ENCODE measurements at regions of chr2 and their contacts with region 1.

Region 1: DNA sequence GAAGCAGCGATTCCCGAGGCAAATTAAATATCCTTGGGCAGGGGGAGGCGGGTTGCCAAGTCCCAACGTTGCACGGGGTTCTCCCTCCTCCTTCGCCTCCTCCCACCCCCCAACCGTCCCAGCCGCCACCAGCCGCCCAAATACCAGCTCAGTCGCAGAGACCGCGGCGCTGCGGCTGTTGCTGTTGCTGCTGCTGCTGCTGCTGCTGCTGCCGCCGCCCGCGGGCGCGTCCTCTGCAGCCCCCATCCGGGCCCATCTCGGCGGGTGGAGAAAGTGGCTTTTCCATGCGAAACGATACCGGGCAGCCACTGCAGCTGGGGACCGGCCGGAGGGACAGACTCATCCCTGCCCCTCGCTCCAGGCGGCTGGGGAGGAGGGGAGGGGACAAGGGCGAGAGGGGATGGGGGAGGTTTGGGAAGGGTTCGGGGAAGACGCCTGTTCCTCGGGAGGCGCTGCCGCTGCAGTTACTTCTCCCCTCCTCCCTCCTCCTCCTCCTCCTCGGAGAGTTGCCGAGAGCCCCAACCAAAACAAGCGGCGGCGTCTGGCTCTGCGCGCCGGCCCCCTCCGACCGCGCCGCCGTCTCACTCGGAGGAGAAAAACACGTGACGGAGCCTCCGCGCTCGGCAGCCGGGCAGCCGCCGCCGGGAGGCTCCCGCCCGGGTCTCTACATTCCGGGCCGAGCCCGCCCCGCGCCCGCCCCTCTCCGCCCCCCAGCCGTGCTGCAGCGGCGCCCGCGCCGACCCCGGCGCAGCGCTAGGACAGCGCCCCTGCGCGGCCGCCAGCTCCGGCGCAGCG is at the start of gene IRS1:
- DNase-seq: peak in 1 of 2 donors; percentile 85
- H3K4me3 ChIP-seq: peak within 1 kb of the TSS; percentile 75 to 86
- H3K27ac ChIP-seq: peak within 1 kb of the TSS; percentile 94 to 95
- H3K4me1 ChIP-seq: peaks cover 14 to 35% of the 10 kb centered on the region in 2 donors
- H3K27me3 ChIP-seq: no peaks in the 10 kb centered on the region
- CTCF ChIP-seq: no peak
- total RNA-seq, gene IRS1: 18.6 TPM

Region 2: DNA sequence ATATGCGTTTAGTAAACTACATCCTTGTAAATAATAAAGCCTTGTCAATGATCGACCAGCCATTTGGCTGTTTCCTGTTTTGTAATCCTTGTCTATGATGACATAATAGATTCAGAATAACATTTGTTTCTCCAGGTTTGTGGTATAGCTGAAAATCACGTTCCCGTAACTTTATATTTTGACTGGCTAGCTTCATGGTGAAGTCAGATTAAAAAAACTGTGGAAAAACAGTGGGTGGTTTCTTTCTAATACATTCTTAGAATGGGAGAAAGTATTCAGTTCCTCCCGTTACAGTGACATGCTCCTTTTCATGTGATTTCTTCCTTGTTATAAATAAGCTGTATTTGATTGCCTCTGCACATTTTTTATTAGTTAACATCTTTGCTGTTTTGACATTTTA is 1032.9 kb before region 1 on chr2:
- intact Hi-C with region 1: loop called (anchors 5 kb)
- DNase-seq: no peak
- H3K4me3 ChIP-seq: no peak overlapping the region
- H3K27ac ChIP-seq: peak overlapping the region; percentile 58 to 62
- H3K4me1 ChIP-seq: peaks cover 0 to 7% of the 10 kb centered on the region in 2 donors
- H3K27me3 ChIP-seq: no peaks in the 10 kb centered on the region
- CTCF ChIP-seq: no peak

Region 3: DNA sequence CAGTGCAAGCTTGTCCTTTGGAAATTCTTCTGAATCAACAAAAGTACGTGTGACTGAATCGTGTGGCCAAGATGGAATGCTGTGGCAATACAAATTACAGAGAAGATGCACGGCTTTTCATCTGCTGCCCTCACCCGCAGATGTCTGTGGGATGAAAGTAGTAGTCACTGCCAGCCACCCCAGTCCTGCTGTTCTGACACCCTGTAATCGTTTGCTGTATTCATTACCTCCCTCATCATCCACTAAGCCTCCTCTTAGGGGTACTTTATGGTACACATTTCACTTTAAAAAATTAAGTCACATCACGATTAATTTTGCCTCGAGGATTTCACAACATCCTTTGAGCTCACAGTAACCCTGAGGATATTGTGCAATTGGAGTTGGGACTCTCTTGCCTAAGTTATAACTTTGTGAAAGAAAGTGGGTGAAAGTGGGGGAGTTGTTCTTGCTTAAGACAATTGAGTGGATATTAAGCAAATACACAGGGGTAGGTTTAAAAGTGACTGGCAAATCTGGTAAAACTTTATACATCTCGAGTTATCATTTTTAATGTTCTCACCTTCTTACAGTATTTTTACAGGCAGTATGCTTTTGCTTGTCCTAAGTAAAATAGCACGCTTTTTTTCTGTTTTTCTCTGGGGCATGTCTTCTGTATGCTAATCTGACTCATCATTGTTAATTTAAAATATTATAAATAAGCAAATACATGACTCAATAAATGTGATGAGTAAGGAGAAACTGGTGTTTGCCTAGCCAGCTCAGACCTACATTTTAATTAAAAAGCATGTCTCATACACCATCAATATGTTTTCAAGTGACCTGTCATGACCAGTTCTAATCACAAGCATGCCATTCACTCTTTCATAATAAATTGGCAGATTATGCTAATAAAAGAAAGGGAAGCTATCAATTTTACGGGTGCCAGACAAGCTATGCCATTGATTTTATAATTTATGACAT is 680.6 kb before region 1 on chr2:
- intact Hi-C with region 1: loop called (anchors 5 kb)
- DNase-seq: no peak
- H3K4me3 ChIP-seq: peak overlapping the region in 1 of 2 donors; percentile 4
- H3K27ac ChIP-seq: peak overlapping the region in 1 of 2 donors; percentile 12
- H3K4me1 ChIP-seq: peaks cover 0 to 3% of the 10 kb centered on the region in 2 donors
- H3K27me3 ChIP-seq: no peaks in the 10 kb centered on the region
- CTCF ChIP-seq: no peak

Region 4: GRCh38 chr2:226478109-226478809 is 321.1 kb before region 1 on chr2:
- intact Hi-C with region 1: loop called (anchors 2 kb)
- DNase-seq: peak; percentile 28 to 82
- H3K4me3 ChIP-seq: peak overlapping the region in 1 of 2 donors; percentile 8
- H3K27ac ChIP-seq: peak overlapping the region; percentile 74 to 82
- H3K4me1 ChIP-seq: peaks cover 6 to 8% of the 10 kb centered on the region in 2 donors
- H3K27me3 ChIP-seq: no peaks in the 10 kb centered on the region
- CTCF ChIP-seq: no peak

Region 5: DNA sequence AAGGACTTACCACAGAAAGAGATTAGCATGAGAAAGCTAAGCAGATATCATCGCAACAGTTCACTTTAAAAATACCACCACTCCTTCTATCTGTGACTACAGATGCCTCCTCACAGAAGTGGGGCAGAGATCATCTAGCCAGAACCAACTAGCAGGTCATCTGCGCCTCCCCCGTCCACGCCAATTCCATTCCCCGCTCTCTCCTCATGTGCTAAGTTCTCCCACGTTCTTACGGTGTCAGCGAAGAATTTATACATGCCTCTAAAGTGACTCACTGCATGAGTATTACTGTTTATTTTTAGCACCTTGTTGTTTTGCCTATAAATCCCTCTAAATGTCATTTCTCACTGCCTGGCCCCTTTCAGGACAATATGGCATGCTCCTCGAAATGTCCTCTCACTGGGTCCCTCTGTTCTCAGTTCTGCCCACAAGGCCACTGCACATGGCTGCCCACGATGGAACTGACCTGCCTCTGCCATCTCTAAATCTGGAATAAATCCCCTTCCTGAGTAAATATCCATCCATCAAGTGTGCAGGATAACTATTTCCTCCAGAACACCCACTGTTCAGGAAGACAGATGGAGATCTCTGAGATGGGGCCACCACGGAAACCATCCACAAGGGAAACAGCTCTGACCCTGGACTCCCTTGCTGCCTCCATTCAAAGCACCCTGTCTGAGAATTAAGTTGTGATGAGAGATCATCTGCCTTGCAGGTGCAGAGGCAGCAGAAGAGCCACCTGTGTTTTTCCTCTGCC is 137.4 kb before region 1 on chr2:
- intact Hi-C with region 1: loop called (anchors 2 kb)
- DNase-seq: peak in 1 of 2 donors; percentile 85
- H3K4me3 ChIP-seq: no peak overlapping the region
- H3K27ac ChIP-seq: peak overlapping the region; percentile 83
- H3K4me1 ChIP-seq: peaks cover 8 to 31% of the 10 kb centered on the region in 2 donors
- H3K27me3 ChIP-seq: no peaks in the 10 kb centered on the region
- CTCF ChIP-seq: no peak

Region 6: DNA sequence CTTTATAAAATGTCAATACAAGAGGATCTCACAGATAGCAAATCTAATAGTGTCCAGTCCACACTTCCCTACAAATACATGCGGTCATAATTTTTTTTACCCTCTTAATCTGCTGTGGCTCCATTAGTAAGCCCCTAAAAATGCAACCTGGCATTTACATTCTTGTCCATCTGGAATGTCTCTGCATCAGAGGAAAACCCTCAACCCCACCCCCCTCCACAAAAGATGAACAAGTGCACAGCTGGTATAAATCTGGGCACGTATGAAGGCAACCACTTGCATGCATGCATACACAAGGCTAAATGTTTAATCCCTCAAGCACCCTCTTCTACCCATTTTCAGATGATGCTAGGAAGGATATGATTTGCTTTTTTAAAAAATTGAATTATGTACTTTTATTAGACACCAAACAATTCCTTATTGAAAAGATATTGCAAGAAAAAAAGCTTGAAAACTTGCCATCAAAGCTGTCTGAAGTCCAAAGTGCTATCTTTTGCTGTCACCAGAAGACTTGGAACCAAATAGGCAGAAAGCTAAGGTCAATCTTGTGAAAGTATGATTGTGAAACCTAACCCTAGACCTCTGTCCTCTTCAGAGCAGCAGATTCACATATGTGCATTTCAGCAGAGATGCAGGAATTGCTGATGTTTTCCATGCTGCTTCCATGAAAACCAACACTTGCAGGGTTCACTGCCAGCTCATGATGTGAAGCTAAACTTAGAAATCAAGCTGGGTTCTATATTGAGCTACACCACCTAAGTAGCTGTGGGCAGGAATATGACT is 38.8 kb before region 1 on chr2:
- intact Hi-C with region 1: loop called (anchors 2 kb)
- DNase-seq: no peak
- H3K4me3 ChIP-seq: no peak overlapping the region
- H3K27ac ChIP-seq: peak overlapping the region; percentile 31 to 52
- H3K4me1 ChIP-seq: peaks cover 7 to 41% of the 10 kb centered on the region in 2 donors
- H3K27me3 ChIP-seq: no peaks in the 10 kb centered on the region
- CTCF ChIP-seq: no peak

Region 7: GRCh38 chr2:226984750-226985582 is 185.6 kb after region 1 on chr2:
- intact Hi-C with region 1: loop called (anchors 2 kb)
- DNase-seq: no peak
- H3K4me3 ChIP-seq: no peak overlapping the region
- H3K27ac ChIP-seq: no peak overlapping the region
- H3K4me1 ChIP-seq: peaks cover 0 to 3% of the 10 kb centered on the region in 2 donors
- H3K27me3 ChIP-seq: no peaks in the 10 kb centered on the region
- CTCF ChIP-seq: peak; percentile 71 to 74 (median 73)

Region 8: DNA sequence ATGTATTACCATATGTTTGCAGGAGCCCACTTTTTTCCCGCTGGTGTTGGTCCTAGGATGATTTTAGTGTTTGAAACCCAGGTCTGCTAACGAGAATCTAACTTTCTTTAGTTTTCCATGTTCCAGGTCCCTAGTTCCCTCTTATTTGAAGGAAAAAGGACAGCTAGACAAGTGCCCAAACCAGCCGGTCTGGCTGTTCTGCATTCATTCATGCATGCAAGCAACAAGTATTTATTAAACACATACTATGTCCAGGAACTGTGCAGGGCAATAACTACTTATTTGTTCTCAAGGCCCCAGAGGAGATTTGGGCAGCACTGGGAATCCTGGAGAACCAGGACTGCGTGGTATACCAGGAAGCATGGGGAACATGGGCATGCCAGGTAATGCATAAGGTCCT is 490.3 kb after region 1 on chr2:
- intact Hi-C with region 1: no loop called
- DNase-seq: no peak
- H3K4me3 ChIP-seq: no peak overlapping the region
- H3K27ac ChIP-seq: no peak overlapping the region
- H3K4me1 ChIP-seq: no peaks in the 10 kb centered on the region
- H3K27me3 ChIP-seq: no peaks in the 10 kb centered on the region
- CTCF ChIP-seq: no peak